ENCODE measurements at regions of chr1 and their contacts with region 1.

Region 1: DNA sequence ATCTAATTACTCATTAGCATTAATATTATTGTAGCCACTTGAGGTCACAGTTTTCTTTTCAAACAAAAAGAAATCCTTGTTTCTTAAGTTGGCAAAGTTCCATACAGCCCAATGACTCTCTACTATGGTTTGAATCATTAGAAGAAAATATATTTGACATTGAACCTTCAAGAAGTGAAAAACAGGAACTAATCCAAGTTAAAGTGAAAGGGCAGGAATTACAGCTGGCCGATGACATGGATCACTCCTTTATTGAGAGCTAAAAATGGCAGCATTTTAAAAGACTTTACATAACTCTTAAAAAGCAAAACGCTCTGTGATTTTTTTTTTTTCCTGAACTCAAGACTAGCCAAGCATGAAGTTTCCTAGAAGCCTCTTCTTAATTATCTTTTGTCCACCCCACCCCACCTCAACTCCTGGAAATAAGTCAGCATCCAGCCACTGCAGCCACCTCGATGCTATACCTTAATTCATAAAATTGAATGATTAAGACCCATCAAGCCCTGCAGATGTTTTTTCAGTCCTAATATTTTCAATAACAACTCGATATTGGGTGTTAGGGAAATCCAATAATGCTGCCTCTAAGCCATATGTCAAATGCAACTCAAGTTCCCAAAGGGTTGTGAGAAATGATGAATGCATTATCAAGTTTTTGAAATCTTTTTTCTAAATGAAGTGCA is 323.1 kb downstream of the HHIPL2 start:
- DNase-seq: no peak
- H3K4me3 ChIP-seq: no peak overlapping the region
- H3K4me3 Mint-ChIP-seq: no peak overlapping the region
- H3K27ac Mint-ChIP-seq: no peak overlapping the region
- H3K4me1 ChIP-seq: no peaks in the 10 kb centered on the region
- H3K4me1 Mint-ChIP-seq: no peaks in the 10 kb centered on the region
- H3K27me3 ChIP-seq: no peaks in the 10 kb centered on the region
- H3K27me3 Mint-ChIP-seq: no peaks in the 10 kb centered on the region
- CTCF ChIP-seq: no peak

Region 2: DNA sequence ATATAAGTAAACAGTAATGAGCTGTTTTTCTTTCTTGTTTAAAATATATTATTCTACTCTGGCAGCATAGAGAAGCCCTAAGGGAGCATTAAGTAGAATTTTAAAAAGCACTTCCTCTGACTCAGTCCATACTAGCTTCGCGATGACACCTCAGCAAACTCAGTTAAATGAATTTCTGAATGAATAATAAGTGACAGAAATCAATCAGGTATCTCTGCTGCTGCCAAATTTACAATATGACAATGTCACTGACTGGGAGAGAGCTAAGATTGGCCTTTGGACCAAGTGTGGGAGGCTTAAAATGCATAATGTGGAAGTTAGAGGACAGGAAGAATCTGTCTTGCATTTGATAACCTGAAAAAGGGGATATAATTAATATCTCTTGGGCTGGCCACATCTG is 27.1 kb after region 1 on chr1:
- CTCF ChIA-PET with region 1: no interaction called
- POLR2A ChIA-PET with region 1: no interaction called
- intact Hi-C with region 1: no loop called
- DNase-seq: no peak
- H3K4me3 ChIP-seq: no peak overlapping the region
- H3K4me3 Mint-ChIP-seq: no peak overlapping the region
- H3K27ac Mint-ChIP-seq: no peak overlapping the region
- H3K4me1 ChIP-seq: peaks cover 4% of the 10 kb centered on the region; the same call in 1 of the 2 replicates
- H3K4me1 Mint-ChIP-seq: no peaks in the 10 kb centered on the region
- H3K27me3 ChIP-seq: no peaks in the 10 kb centered on the region
- H3K27me3 Mint-ChIP-seq: peaks cover 2% of the 10 kb centered on the region
- CTCF ChIP-seq: no peak

Region 3: GRCh38 chr1:222413436-222413835 is 188.7 kb after region 1 on chr1:
- CTCF ChIA-PET with region 1: no interaction called
- POLR2A ChIA-PET with region 1: no interaction called
- intact Hi-C with region 1: no loop called
- DNase-seq: no peak
- H3K4me3 ChIP-seq: no peak overlapping the region
- H3K4me3 Mint-ChIP-seq: no peak overlapping the region
- H3K27ac Mint-ChIP-seq: no peak overlapping the region
- H3K4me1 ChIP-seq: no peaks in the 10 kb centered on the region
- H3K4me1 Mint-ChIP-seq: no peaks in the 10 kb centered on the region
- H3K27me3 ChIP-seq: no peaks in the 10 kb centered on the region
- H3K27me3 Mint-ChIP-seq: peaks cover 10% of the 10 kb centered on the region
- CTCF ChIP-seq: no peak

Region 4: GRCh38 chr1:222455188-222455879 is 230.6 kb after region 1 on chr1:
- CTCF ChIA-PET with region 1: no interaction called
- POLR2A ChIA-PET with region 1: no interaction called
- intact Hi-C with region 1: loop called (anchors 1 kb)
- DNase-seq: peak; percentile 75 to 81
- H3K4me3 ChIP-seq: no peak overlapping the region
- H3K4me3 Mint-ChIP-seq: peak overlapping the region; percentile 4
- H3K27ac Mint-ChIP-seq: no peak overlapping the region
- H3K4me1 ChIP-seq: no peaks in the 10 kb centered on the region
- H3K4me1 Mint-ChIP-seq: no peaks in the 10 kb centered on the region
- H3K27me3 ChIP-seq: no peaks in the 10 kb centered on the region
- H3K27me3 Mint-ChIP-seq: peaks cover 6% of the 10 kb centered on the region
- CTCF ChIP-seq: peak; percentile 81 to 90